Activated CD4-positive, alpha-beta T cell treated with anti-CD3 and anti-CD28 coated beads, Interleukin-2, amount 10 ng/mL, durations not matched to agents 24 days and 14 days (primary cell): ENCODE measurements at regions of chr14 and their contacts with region 1.

Region 1: DNA sequence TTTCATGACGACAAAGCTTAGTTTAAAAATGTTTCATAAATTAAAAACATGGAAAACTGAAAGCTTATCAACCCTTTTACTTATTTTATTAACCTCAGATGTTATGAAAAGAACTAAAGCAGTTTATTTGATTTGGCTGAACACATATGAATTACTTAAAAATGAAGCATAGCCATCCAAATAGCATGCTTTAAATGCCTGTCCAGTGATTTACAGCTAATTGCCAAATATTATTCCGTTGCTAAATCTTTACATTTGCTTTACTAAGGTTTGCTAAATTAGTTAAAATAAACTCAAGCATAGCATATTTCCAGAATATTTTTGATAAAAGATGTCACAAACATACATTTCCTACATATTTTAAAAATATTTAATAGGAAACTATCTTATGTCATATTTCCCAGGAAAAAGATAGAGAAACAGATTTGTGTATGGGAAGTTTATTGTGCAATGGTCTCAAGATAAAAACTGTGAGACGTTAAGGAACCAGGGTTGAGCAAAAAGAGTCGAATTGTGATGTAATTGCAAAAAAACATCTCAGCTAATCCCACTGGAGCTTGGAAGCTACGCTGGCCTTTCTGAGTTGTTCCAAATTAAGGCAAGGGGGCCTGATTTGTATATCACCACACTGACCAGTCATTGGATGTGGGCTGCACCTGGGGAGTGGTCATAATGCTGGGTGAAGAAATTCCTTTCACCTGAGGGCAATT is 25.8 kb downstream of the GPR135 start:
- DNase-seq: no peak
- H3K4me3 Mint-ChIP-seq: no peak overlapping the region
- H3K27ac Mint-ChIP-seq: no peak overlapping the region
- H3K4me1 Mint-ChIP-seq: no peaks in the 10 kb centered on the region
- H3K27me3 Mint-ChIP-seq: peaks cover 4% of the 10 kb centered on the region

Region 2: GRCh38 chr14:59028476-59029202 is 410.8 kb before region 1 on chr14:
- intact Hi-C with region 1: loop called (anchors 1 kb)
- DNase-seq: peak; percentile 76
- H3K4me3 Mint-ChIP-seq: no peak overlapping the region
- H3K27ac Mint-ChIP-seq: no peak overlapping the region
- H3K4me1 Mint-ChIP-seq: peaks cover 2% of the 10 kb centered on the region
- H3K27me3 Mint-ChIP-seq: peaks cover 13% of the 10 kb centered on the region

Region 3: DNA sequence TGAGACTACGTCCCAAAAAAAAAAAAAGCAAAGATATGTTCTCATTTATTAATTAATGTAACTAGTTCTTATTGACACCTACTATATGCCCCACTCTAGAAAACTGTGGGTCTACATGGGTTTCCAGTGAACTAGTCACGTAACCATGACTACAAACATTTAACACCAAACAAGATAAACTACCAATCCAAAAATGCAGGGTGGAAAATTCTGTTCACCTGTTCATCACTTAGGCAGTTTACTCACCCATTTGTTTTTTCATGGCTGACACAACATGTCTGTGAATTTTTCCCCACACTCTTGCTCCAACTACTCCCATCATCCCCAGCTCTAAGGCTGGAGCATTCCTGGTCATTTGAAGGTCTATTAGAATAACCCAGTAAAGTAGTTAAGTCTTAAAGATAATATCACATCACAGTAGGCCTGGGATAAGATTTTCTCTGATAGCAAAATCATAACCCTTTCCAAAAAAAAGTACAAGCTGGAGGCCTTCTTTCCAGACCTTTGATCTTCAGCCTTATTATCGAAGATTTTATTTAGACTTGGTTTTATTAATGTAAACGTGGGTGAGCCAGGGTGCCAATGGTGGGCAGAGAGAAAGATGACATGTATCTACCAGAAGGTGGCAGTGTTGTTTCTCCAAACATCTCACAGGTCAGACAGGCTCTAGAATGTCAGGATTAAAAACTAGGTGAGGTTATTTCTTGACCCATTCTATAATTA is 312.5 kb before region 1 on chr14:
- intact Hi-C with region 1: loop called (anchors 1 kb)
- DNase-seq: peak; percentile 75
- H3K4me3 Mint-ChIP-seq: no peak overlapping the region
- H3K27ac Mint-ChIP-seq: no peak overlapping the region
- H3K4me1 Mint-ChIP-seq: no peaks in the 10 kb centered on the region
- H3K27me3 Mint-ChIP-seq: peaks cover 23% of the 10 kb centered on the region